H1 (cell line): ENCODE measurements at regions of chr2 and their contacts with region 1.

Region 1: GRCh38 chr2:33555681-33556080 is 43.4 kb downstream of the FAM98A start:
- DNase-seq: no peak
- H3K4me3 ChIP-seq: no peak overlapping the region
- H3K27ac ChIP-seq: no peak overlapping the region
- H3K4me1 ChIP-seq: peaks cover 0 to 6% (median 0%) of the 10 kb centered on the region in 4 experiments; a peak in 1 of 7 replicates
- H3K27me3 ChIP-seq: no peaks in the 10 kb centered on the region
- CTCF ChIP-seq: no peak
- EP300 ChIP-seq: no peak
- POLR2A ChIP-seq: no peak
- RAD21 ChIP-seq: no peak

Region 2: GRCh38 chr2:33541243-33541642 is 14.4 kb before region 1 on chr2:
- CTCF ChIA-PET with region 1: interaction called, 10 read pairs
- POLR2A ChIA-PET with region 1: interaction called, 3 read pairs
- DNase-seq: no peak
- H3K4me3 ChIP-seq: no peak overlapping the region
- H3K27ac ChIP-seq: no peak overlapping the region
- H3K4me1 ChIP-seq: 0 out of 7 replicates have a peak, but pooled peaks cover 0 to 3% (median under 1%) of the 10 kb centered on the region in 4 experiments
- H3K27me3 ChIP-seq: no peaks in the 10 kb centered on the region
- CTCF ChIP-seq: no peak
- EP300 ChIP-seq: no peak
- POLR2A ChIP-seq: no peak
- RAD21 ChIP-seq: no peak